H1 (cell line): ENCODE measurements at regions of chr3 and their contacts with region 1.

Region 1: DNA sequence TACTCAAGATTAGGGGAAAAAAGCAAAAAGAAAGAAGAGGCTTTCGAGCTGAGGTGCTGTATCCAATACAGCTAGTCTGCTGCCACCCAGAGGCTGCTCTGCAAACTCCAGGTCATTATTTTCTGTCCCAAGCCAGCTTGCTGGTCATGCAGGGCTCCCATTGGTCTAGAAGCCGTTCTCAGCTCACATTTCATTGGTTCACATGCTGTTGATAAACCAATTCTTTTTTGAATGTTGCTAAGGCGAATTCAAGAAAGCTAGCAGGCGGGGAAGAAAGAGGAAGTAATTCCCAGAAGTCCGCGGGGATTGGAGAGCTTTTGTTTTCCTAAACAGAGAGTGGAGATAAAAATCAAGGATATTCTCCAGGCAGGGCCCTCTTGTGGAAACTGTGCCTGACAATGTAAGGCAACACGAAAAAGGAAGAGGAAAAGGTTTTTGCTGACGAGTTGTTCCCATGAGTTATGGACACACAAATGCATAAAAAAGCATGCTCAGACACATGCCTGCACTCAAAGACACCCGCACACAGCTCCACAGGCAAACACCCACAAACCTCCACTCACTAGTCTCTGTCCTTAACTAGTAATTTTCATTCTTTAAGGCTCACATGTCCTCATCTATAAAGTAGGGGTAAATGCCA is 33.4 kb downstream of the FSTL1 start:
- DNase-seq: peak; percentile 87 to 93
- H3K4me3 ChIP-seq: peak overlapping the region in 2 of 4 experiments; percentile 8 to 22; a peak in 3 of 8 replicates
- H3K27ac ChIP-seq: peak overlapping the region; percentile 62
- H3K4me1 ChIP-seq: peaks cover 0 to 13% (median 9%) of the 10 kb centered on the region in 4 experiments; a peak in 6 of 7 replicates
- H3K27me3 ChIP-seq: no peaks in the 10 kb centered on the region
- CTCF ChIP-seq: peak; percentile 65 to 87 (median 75)
- EP300 ChIP-seq: no peak
- POLR2A ChIP-seq: no peak
- RAD21 ChIP-seq: peak; percentile 64 to 73; a peak in 3 of 4 replicates

Region 2: DNA sequence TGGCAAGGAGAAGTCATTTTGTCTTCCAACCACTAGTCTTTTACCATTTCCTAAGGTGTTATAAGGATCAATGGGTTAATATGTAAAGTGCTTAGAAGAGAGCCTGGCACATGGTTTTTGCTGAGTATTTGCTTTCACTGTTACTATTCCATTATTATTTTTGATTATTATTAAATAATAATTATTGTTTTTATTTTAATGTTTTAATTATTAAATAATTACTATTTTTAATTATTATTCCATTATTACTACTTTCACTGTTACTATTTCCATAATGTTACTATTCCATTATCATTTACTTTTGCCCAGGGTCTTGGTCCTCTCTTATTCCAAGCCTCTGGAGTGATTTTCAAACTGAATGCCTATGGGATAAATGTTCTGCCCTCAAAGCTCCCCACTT is 15.1 kb before region 1 on chr3:
- CTCF ChIA-PET with region 1: interaction called, 19 read pairs
- POLR2A ChIA-PET with region 1: interaction called, 7 read pairs
- DNase-seq: no peak
- H3K4me3 ChIP-seq: no peak overlapping the region
- H3K27ac ChIP-seq: no peak overlapping the region
- H3K4me1 ChIP-seq: no peaks in the 10 kb centered on the region
- H3K27me3 ChIP-seq: no peaks in the 10 kb centered on the region
- CTCF ChIP-seq: no peak
- EP300 ChIP-seq: no peak
- POLR2A ChIP-seq: no peak
- RAD21 ChIP-seq: no peak

Region 3: GRCh38 chr3:120450600-120451271 is 33.3 kb after region 1 on chr3 and contains the start of gene FSTL1:
- CTCF ChIA-PET with region 1: interaction called, 294 read pairs
- POLR2A ChIA-PET with region 1: interaction called, 299 read pairs
- DNase-seq: peak in 1 of 2 experiments; percentile 82
- H3K4me3 ChIP-seq: peak within 1 kb of the TSS; percentile 74 to 97 (median 87)
- H3K27ac ChIP-seq: peak within 1 kb of the TSS; percentile 83; the same call in 1 of the 2 replicates
- H3K4me1 ChIP-seq: peaks cover 6 to 23% (median 19%) of the 10 kb centered on the region in 4 experiments; a peak in 5 of 7 replicates
- H3K27me3 ChIP-seq: no peaks in the 10 kb centered on the region
- CTCF ChIP-seq: no peak
- EP300 ChIP-seq: no peak
- POLR2A ChIP-seq: peak; percentile 71 to 93; a peak in 2 of 3 replicates
- RAD21 ChIP-seq: no peak
- total RNA-seq, gene FSTL1: 502 and 516 TPM in 2 replicates

Region 4: DNA sequence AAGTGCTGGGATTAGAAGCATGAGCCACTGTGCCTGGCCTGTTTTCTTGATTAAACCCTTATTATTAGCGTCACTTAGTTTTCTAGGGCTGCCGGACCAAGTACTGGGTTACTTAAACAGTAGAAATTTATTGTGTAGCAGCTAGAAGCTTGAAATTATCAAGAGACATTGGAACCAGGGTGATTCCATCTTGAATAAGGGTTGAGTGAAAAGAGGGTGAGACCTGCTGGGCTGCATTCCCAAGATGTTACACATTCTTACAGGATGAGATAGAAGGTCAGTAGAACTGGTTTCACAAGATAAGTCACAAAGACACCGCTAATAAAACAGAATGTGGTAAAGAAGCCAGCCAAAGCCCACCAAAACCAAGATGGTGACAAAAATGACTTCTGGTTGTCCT is 52.1 kb after region 1 on chr3:
- CTCF ChIA-PET with region 1: interaction called, 36 read pairs
- POLR2A ChIA-PET with region 1: no interaction called
- DNase-seq: no peak
- H3K4me3 ChIP-seq: peak overlapping the region in 2 of 4 experiments; percentile 7 to 10; a peak in 1 of 8 replicates
- H3K27ac ChIP-seq: peak overlapping the region; percentile 64
- H3K4me1 ChIP-seq: peaks cover 5 to 20% (median 10%) of the 10 kb centered on the region in 4 experiments; a peak in 5 of 7 replicates
- H3K27me3 ChIP-seq: no peaks in the 10 kb centered on the region
- CTCF ChIP-seq: no peak
- EP300 ChIP-seq: peak in 1 of 2 experiments; percentile 87; a peak in 1 of 3 replicates
- POLR2A ChIP-seq: no peak
- RAD21 ChIP-seq: no peak

Region 5: GRCh38 chr3:120544361-120544760 is 127.0 kb after region 1 on chr3:
- CTCF ChIA-PET with region 1: interaction called, 12 read pairs
- POLR2A ChIA-PET with region 1: no interaction called
- DNase-seq: no peak
- H3K4me3 ChIP-seq: no peak overlapping the region
- H3K27ac ChIP-seq: no peak overlapping the region
- H3K4me1 ChIP-seq: no peaks in the 10 kb centered on the region
- H3K27me3 ChIP-seq: no peaks in the 10 kb centered on the region
- CTCF ChIP-seq: no peak
- EP300 ChIP-seq: no peak
- POLR2A ChIP-seq: no peak
- RAD21 ChIP-seq: no peak

Region 6: GRCh38 chr3:120558771-120559241 is 141.4 kb after region 1 on chr3:
- CTCF ChIA-PET with region 1: interaction called, 130 read pairs
- POLR2A ChIA-PET with region 1: interaction called, 29 read pairs
- DNase-seq: peak in 1 of 2 experiments; percentile 92
- H3K4me3 ChIP-seq: peak overlapping the region; percentile 73 to 81 (median 76); a peak in 7 of 8 replicates
- H3K27ac ChIP-seq: no peak overlapping the region
- H3K4me1 ChIP-seq: peaks cover 4 to 13% (median 6%) of the 10 kb centered on the region in 4 experiments; a peak in 6 of 7 replicates
- H3K27me3 ChIP-seq: peaks cover 0 to 3% (median 0%) of the 10 kb centered on the region in 4 experiments; a peak in 2 of 7 replicates
- CTCF ChIP-seq: peak; percentile 83 to 90 (median 86)
- EP300 ChIP-seq: peak in 1 of 2 experiments; percentile 76; a peak in 1 of 3 replicates
- POLR2A ChIP-seq: peak in 1 of 2 experiments; percentile 52; a peak in 2 of 3 replicates
- RAD21 ChIP-seq: peak; percentile 96 to 98

Region 7: GRCh38 chr3:120673116-120673515 is 255.7 kb after region 1 on chr3:
- CTCF ChIA-PET with region 1: no interaction called
- POLR2A ChIA-PET with region 1: no interaction called
- DNase-seq: no peak
- H3K4me3 ChIP-seq: no peak overlapping the region
- H3K27ac ChIP-seq: no peak overlapping the region
- H3K4me1 ChIP-seq: peaks cover 0 to 9% (median 2%) of the 10 kb centered on the region in 4 experiments; a peak in 4 of 7 replicates
- H3K27me3 ChIP-seq: no peaks in the 10 kb centered on the region
- CTCF ChIP-seq: no peak
- EP300 ChIP-seq: no peak
- POLR2A ChIP-seq: no peak
- RAD21 ChIP-seq: no peak